CD8-positive, alpha-beta memory T cell (primary cell): ENCODE measurements at regions of chr16 and their contacts with region 1.

Region 1: GRCh38 chr16:30445408-30446202 is at the start of gene SEPHS2:
- DNase-seq: peak; percentile 91 to 98 (median 92)
- H3K4me3 ChIP-seq: peak within 1 kb of the TSS; percentile 92
- H3K4me3 Mint-ChIP-seq: peak within 1 kb of the TSS; percentile 88 to 97 (median 95)
- H3K27ac ChIP-seq: peak within 1 kb of the TSS; percentile 93
- H3K27ac Mint-ChIP-seq: peak within 1 kb of the TSS; percentile 87 to 96 (median 94)
- H3K4me1 ChIP-seq: peaks cover 40% of the 10 kb centered on the region
- H3K4me1 Mint-ChIP-seq: peaks cover 37 to 50% (median 45%) of the 10 kb centered on the region in 3 donors
- H3K27me3 ChIP-seq: no peaks in the 10 kb centered on the region
- H3K27me3 Mint-ChIP-seq: peaks cover 0 to 1% of the 10 kb centered on the region in 2 donors
- total RNA-seq, gene SEPHS2: 68.2 to 71.0 TPM

Region 2: DNA sequence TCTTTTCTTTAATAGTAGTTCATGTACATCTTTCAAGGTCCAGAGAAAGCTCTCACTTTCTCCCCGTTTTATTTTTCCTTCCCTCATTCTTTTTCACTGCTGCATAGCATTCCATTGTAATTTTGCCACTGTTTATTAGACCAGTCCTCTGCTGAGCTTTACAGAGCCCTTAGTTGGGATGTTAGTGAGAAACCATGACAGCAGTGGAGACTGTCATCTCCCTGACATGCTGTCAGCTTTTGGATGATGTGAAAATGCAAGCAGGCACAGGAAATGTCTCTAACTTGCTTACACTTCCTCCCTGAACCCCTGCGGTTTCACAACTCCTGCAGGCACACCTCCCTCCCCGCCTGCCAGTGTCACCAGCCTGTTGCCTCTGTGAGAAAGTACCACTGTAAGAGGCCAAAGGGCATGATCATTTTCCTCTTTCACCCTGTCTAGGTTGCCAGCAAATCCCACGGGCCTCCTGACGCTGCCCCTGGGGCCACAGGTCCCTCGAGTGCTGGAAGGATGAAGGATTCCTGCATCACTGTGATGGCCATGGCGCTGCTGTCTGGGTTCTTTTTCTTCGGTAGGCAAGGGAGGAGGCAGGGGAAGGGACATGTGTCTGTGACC is 26.8 kb after region 1 on chr16 and contains the start of gene ITGAL:
- CTCF ChIA-PET with region 1: interaction called, 34 read pairs
- POLR2A ChIA-PET with region 1: interaction called, 10 read pairs
- DNase-seq: peak; percentile 76 to 93 (median 84)
- H3K4me3 ChIP-seq: peak within 1 kb of the TSS; percentile 91
- H3K4me3 Mint-ChIP-seq: peak within 1 kb of the TSS; percentile 96 to 100 (median 98)
- H3K27ac ChIP-seq: peak within 1 kb of the TSS; percentile 74
- H3K27ac Mint-ChIP-seq: peak within 1 kb of the TSS; percentile 94 to 99 (median 97)
- H3K4me1 ChIP-seq: peaks cover 65% of the 10 kb centered on the region
- H3K4me1 Mint-ChIP-seq: peaks cover 54 to 76% (median 56%) of the 10 kb centered on the region in 3 donors
- H3K27me3 ChIP-seq: no peaks in the 10 kb centered on the region
- H3K27me3 Mint-ChIP-seq: peaks cover 0 to 1% of the 10 kb centered on the region in 2 donors
- total RNA-seq, gene ITGAL: 333 to 363 TPM

Region 3: DNA sequence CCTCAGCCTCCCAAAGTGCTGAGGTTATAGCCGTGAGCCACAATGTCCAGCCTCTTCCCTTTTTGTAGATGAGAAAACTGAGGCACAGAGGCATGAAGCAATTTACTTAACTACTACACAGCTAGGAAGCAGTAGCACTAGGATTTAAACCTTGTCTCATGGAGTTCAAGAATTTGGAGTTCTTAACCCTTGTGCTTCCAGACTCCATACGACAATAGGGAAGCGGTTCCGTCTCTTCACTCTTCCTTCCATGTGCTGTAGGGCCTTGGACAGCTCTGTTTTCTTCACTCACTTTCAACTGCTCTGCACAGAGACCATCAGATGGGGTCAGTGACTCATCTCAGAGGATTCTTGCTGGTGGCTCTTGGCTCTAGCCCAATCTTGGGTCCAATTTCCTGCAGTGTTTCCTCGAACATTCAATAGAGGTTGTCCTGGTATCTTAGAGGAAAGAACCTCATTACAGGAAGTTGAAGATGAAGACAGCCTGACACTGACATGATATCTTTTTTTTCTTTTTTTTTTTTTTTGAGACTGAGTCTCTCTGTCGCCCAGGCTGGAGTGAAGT is 46.2 kb after region 1 on chr16:
- CTCF ChIA-PET with region 1: interaction called, 27 read pairs
- POLR2A ChIA-PET with region 1: interaction called, 5 read pairs
- DNase-seq: peak in 3 of 5 donors; percentile 10 to 68 (median 28)
- H3K4me3 ChIP-seq: no peak overlapping the region
- H3K4me3 Mint-ChIP-seq: peak overlapping the region in 2 of 7 donors; percentile 6 to 46
- H3K27ac ChIP-seq: peak overlapping the region; percentile 44
- H3K27ac Mint-ChIP-seq: peak overlapping the region in 5 of 8 donors; percentile 57 to 91 (median 68)
- H3K4me1 ChIP-seq: peaks cover 13% of the 10 kb centered on the region
- H3K4me1 Mint-ChIP-seq: peaks cover 20 to 45% (median 28%) of the 10 kb centered on the region in 3 donors
- H3K27me3 ChIP-seq: no peaks in the 10 kb centered on the region
- H3K27me3 Mint-ChIP-seq: no peaks in the 10 kb centered on the region

Region 4: DNA sequence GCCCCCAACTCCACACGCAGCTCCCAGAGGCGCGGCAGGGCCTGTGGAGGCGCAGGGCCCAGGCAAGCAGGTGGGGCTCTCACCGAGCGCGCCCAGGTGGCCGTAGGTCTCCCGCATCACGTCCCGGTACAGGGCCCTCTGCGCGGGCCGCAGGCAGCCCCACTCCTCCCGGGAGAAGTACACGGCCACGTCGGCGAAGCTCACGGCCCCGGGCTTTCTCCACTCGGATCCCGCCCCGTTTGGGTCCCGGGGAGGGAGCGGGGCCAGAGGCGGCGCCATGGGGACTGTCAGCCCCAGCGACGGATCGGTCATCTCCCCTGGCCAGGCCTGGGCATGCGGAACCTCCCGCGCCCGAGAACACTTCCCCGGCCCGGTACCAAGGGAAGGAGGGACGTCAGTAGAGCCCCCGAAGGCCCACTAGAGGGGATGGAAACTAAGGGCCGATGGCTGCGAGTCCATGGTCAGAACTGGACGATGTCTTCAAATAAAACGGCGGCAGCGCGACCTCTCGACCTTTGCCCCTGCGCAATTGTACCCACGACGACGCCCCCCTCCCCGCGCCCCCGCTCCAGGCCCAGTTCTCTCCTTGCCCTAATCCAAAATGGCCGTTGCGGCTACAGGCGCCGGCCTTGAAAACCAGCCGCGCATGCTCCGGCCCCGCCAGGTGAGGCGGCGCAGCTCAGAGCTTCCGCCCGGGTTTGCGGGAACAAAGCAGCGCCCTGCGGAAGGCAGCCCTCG is 88.9 kb after region 1 on chr16 and contains the start of gene ZNF747:
- CTCF ChIA-PET with region 1: interaction called, 33 read pairs
- POLR2A ChIA-PET with region 1: no interaction called
- DNase-seq: peak; percentile 86 to 94 (median 87)
- H3K4me3 ChIP-seq: peak within 1 kb of the TSS; percentile 98
- H3K4me3 Mint-ChIP-seq: peak within 1 kb of the TSS; percentile 89 to 98 (median 92)
- H3K27ac ChIP-seq: peak within 1 kb of the TSS; percentile 91
- H3K27ac Mint-ChIP-seq: peak within 1 kb of the TSS; percentile 92 to 99 (median 98)
- H3K4me1 ChIP-seq: peaks cover 20% of the 10 kb centered on the region
- H3K4me1 Mint-ChIP-seq: peaks cover 18 to 39% (median 25%) of the 10 kb centered on the region in 3 donors
- H3K27me3 ChIP-seq: no peaks in the 10 kb centered on the region
- H3K27me3 Mint-ChIP-seq: no peaks in the 10 kb centered on the region
- total RNA-seq, gene ZNF747: 13.5 to 17.0 TPM